ENCODE measurements at regions of chrX and their contacts with region 1.

Region 1: GRCh38 chrX:17039826-17040225 is 93.4 kb downstream of the REPS2 start:
- DNase-seq: no peak
- H3K4me3 ChIP-seq: no peak overlapping the region
- H3K27ac ChIP-seq: peak overlapping the region in 1 of 5 donors; percentile 72
- H3K4me1 ChIP-seq: peaks cover 0 to 56% (median 12%) of the 10 kb centered on the region in 4 donors
- H3K27me3 ChIP-seq: no peaks in the 10 kb centered on the region
- CTCF ChIP-seq: no peak
- EP300 ChIP-seq: no peak
- POLR2A ChIP-seq: no peak

Region 2: GRCh38 chrX:16885628-16886027 is 154.2 kb before region 1 on chrX:
- intact Hi-C with region 1: loop called (anchors 5 kb)
- DNase-seq: no peak
- H3K4me3 ChIP-seq: no peak overlapping the region
- H3K27ac ChIP-seq: no peak overlapping the region
- H3K4me1 ChIP-seq: peaks cover 0 to 9% (median 7%) of the 10 kb centered on the region in 4 donors
- H3K27me3 ChIP-seq: peaks cover 0 to 15% (median 0%) of the 10 kb centered on the region in 3 donors
- CTCF ChIP-seq: no peak
- EP300 ChIP-seq: no peak
- POLR2A ChIP-seq: no peak

Measured in stomach (tissue), 19 donors.